ENCODE measurements at regions of chr18 and their contacts with region 1.

Region 1: GRCh38 chr18:9516437-9517064 is 41.2 kb downstream of the RALBP1 start:
- DNase-seq: peak; percentile 8
- ATAC-seq: peak; percentile 69
- H3K4me3 ChIP-seq: no peak overlapping the region
- H3K27ac ChIP-seq: no peak overlapping the region
- H3K4me1 ChIP-seq: peaks cover 4 to 7% of the 10 kb centered on the region in 2 experiments; a peak in 3 of 4 replicates
- H3K27me3 ChIP-seq: no peaks in the 10 kb centered on the region
- CTCF ChIP-seq: peak; percentile 65 to 95 (median 85); a peak in 5 of 6 replicates
- POLR2A ChIP-seq: no peak
- RAD21 ChIP-seq: peak; percentile 89

Region 2: GRCh38 chr18:8988261-8988871 is 528.2 kb before region 1 on chr18:
- CTCF ChIA-PET with region 1: no interaction called
- POLR2A ChIA-PET with region 1: no interaction called
- RAD21 ChIA-PET with region 1: no interaction called
- intact Hi-C with region 1: loop called (anchors 10 kb)
- DNase-seq: peak; percentile 52
- ATAC-seq: peak; percentile 96
- H3K4me3 ChIP-seq: no peak overlapping the region
- H3K27ac ChIP-seq: no peak overlapping the region
- H3K4me1 ChIP-seq: peaks cover 0 to 23% of the 10 kb centered on the region in 2 experiments; a peak in 3 of 4 replicates
- H3K27me3 ChIP-seq: no peaks in the 10 kb centered on the region
- CTCF ChIP-seq: peak; percentile 62 to 86 (median 81); a peak in 5 of 6 replicates
- POLR2A ChIP-seq: no peak
- RAD21 ChIP-seq: peak; percentile 84

Region 3: GRCh38 chr18:9069601-9070000 is 446.9 kb before region 1 on chr18:
- CTCF ChIA-PET with region 1: interaction called, 7 read pairs
- POLR2A ChIA-PET with region 1: no interaction called
- RAD21 ChIA-PET with region 1: no interaction called
- intact Hi-C with region 1: loop called (anchors 1 kb)
- DNase-seq: no peak
- ATAC-seq: no peak
- H3K4me3 ChIP-seq: no peak overlapping the region
- H3K27ac ChIP-seq: no peak overlapping the region
- H3K4me1 ChIP-seq: peaks cover 2 to 23% of the 10 kb centered on the region in 2 experiments; a peak in 3 of 4 replicates
- H3K27me3 ChIP-seq: no peaks in the 10 kb centered on the region
- CTCF ChIP-seq: no peak
- POLR2A ChIP-seq: no peak
- RAD21 ChIP-seq: no peak

Region 4: DNA sequence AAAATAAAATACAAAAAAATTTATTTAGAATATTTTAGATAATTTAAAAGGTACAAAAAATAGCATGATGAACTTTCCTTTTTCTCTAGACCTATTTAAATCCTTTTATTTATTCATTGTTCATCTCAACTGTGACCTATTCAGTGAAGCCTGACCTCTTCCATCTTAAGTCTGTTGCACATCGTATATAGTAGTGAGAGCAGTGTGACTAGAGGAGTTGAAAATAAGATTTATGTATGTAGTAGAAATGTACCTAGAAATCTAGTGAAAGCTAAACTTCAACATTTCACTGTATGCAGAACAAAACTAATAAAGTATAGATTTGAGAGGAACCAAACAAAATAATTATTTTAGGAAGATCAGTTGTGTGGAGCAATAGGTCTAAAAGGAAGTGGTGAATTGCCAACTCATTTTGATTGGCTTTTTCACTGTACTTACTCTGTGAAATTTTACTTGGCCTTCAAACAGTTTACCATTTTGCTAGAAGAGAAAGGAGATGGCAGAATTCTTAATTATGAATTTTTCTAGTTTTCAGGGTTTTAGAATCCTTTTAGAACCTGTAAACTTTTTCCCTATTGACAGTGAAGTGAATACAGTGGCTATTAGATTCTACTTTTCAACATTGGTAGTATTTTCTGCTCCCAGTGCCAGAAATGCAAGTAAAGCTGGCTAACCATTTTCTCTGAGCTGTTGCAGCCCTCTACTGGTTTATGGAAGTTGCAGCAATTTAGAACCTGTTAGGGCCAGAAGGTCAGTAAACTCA is 368.9 kb before region 1 on chr18:
- CTCF ChIA-PET with region 1: no interaction called
- POLR2A ChIA-PET with region 1: no interaction called
- RAD21 ChIA-PET with region 1: no interaction called
- intact Hi-C with region 1: loop called (anchors 10 kb)
- DNase-seq: peak; percentile 48
- ATAC-seq: peak; percentile 89
- H3K4me3 ChIP-seq: no peak overlapping the region
- H3K27ac ChIP-seq: no peak overlapping the region
- H3K4me1 ChIP-seq: peaks cover 0 to 5% of the 10 kb centered on the region in 2 experiments; a peak in 2 of 4 replicates
- H3K27me3 ChIP-seq: no peaks in the 10 kb centered on the region
- CTCF ChIP-seq: peak; percentile 63 to 71 (median 69); a peak in 5 of 6 replicates
- POLR2A ChIP-seq: no peak
- RAD21 ChIP-seq: peak; percentile 85

Region 5: DNA sequence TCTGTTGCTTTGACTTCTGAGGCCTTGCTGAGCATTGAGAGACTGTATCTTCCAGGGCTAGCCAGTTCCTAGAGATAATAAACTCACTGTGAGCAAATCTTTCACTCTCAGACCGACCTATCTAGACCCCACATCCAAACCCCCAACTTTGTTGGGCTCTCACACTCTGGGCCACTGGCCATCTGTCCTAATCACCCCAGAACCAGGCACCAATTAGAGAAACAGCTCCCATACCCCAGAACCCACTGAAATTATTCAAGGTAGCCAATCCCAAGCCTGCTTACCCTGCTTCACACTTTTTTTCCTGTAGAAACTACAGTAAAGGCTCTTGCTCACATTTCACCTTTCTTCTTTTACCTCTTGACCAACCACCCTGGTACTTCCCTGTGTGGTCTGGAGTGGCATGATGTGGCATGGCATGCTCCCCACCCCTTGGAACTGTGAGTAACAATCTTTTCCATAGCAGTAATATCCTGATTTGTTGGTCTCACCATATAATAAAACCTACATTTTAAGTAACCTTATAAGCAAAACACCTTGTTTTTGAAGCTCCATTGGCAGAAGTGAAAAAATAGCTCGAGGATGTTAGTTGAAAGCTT is 324.8 kb before region 1 on chr18:
- CTCF ChIA-PET with region 1: no interaction called
- POLR2A ChIA-PET with region 1: no interaction called
- RAD21 ChIA-PET with region 1: no interaction called
- intact Hi-C with region 1: loop called (anchors 10 kb)
- DNase-seq: no peak
- ATAC-seq: no peak
- H3K4me3 ChIP-seq: no peak overlapping the region
- H3K27ac ChIP-seq: no peak overlapping the region
- H3K4me1 ChIP-seq: no peaks in the 10 kb centered on the region
- H3K27me3 ChIP-seq: no peaks in the 10 kb centered on the region
- CTCF ChIP-seq: no peak
- POLR2A ChIP-seq: no peak
- RAD21 ChIP-seq: no peak

Region 6: GRCh38 chr18:9348079-9348681 is 168.4 kb before region 1 on chr18:
- CTCF ChIA-PET with region 1: no interaction called
- POLR2A ChIA-PET with region 1: no interaction called
- RAD21 ChIA-PET with region 1: no interaction called
- intact Hi-C with region 1: loop called (anchors 5 kb)
- DNase-seq: no peak
- ATAC-seq: peak; percentile 76
- H3K4me3 ChIP-seq: peak overlapping the region in 1 of 2 experiments; percentile 17; a peak in 2 of 4 replicates
- H3K27ac ChIP-seq: peak overlapping the region; percentile 8; the same call in 1 of the 2 replicates
- H3K4me1 ChIP-seq: peaks cover 17 to 21% of the 10 kb centered on the region in 2 experiments
- H3K27me3 ChIP-seq: no peaks in the 10 kb centered on the region
- CTCF ChIP-seq: no peak
- POLR2A ChIP-seq: no peak
- RAD21 ChIP-seq: no peak

Region 7: DNA sequence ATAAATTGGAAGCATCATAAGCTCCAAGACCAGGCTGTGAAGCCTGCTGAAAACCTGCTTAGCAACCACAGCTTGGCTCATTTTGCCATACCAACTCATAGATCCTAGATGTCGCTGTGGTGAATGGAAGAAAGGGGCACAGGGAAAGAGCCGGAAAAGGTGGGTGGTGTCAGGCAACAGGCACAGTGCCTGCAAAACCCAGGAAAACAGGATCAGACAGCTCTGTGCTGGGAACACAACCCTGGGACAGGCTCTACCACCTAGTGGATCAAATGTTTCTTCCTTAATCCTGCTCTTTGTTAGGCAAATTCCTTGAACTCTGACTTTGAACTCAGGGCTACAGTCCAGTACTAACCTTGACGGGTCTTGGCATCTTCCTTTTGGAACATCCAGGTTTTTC is 150.4 kb before region 1 on chr18:
- CTCF ChIA-PET with region 1: interaction called, 3 read pairs
- POLR2A ChIA-PET with region 1: no interaction called
- RAD21 ChIA-PET with region 1: no interaction called
- intact Hi-C with region 1: loop called (anchors 1 kb)
- DNase-seq: peak; percentile 64
- ATAC-seq: peak; percentile 80
- H3K4me3 ChIP-seq: no peak overlapping the region
- H3K27ac ChIP-seq: peak overlapping the region; percentile 6; the same call in 1 of the 2 replicates
- H3K4me1 ChIP-seq: peaks cover 33 to 53% of the 10 kb centered on the region in 2 experiments
- H3K27me3 ChIP-seq: no peaks in the 10 kb centered on the region
- CTCF ChIP-seq: peak; percentile 44 to 55 (median 52); a peak in 5 of 6 replicates
- POLR2A ChIP-seq: no peak
- RAD21 ChIP-seq: peak; percentile 63

Region 8: DNA sequence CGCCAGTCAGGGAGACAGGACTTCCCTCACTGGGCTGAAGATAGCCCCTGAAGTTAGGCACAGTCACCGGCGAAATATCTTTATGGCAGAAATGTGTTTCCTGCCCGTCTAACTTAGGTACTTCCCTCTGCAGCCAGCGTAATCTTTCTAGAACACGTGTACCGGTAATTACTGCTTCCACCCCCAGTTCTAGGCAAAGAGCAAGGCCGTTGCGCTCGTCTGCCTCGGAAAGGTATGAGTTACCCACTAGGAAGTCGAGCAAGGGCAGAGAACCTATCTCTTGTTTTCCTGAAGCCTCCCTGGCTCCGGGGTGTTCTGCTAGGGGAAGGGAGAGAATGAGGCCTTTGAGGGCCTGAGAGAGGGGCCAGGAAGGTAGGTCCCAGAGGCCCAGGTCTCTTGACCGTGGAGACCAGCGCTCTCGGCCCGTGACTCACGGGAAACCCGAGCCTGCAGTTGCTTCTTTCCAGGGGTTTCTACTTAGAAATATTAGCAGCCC is 111.9 kb before region 1 on chr18:
- CTCF ChIA-PET with region 1: no interaction called
- POLR2A ChIA-PET with region 1: no interaction called
- RAD21 ChIA-PET with region 1: no interaction called
- intact Hi-C with region 1: no loop called
- DNase-seq: no peak
- ATAC-seq: no peak
- H3K4me3 ChIP-seq: no peak overlapping the region
- H3K27ac ChIP-seq: no peak overlapping the region
- H3K4me1 ChIP-seq: no peaks in the 10 kb centered on the region
- H3K27me3 ChIP-seq: no peaks in the 10 kb centered on the region
- CTCF ChIP-seq: no peak
- POLR2A ChIP-seq: no peak
- RAD21 ChIP-seq: no peak

Measured in HCT116 (cell line).